ENCODE measurements at regions of chrX and their contacts with region 1.

Region 1: GRCh38 chrX:36930491-36930890 is 77.7 kb upstream of the FAM47C start:
- DNase-seq: no peak
- H3K4me3 ChIP-seq: no peak overlapping the region
- H3K27ac ChIP-seq: no peak overlapping the region
- H3K4me1 ChIP-seq: no peaks in the 10 kb centered on the region
- H3K27me3 ChIP-seq: no peaks in the 10 kb centered on the region
- CTCF ChIP-seq: no peak

Region 2: GRCh38 chrX:37047776-37048175 is 117.3 kb after region 1 on chrX:
- CTCF ChIA-PET with region 1: no interaction called
- POLR2A ChIA-PET with region 1: interaction called, 12 read pairs
- intact Hi-C with region 1: no loop called
- DNase-seq: no peak
- H3K4me3 ChIP-seq: no peak overlapping the region
- H3K27ac ChIP-seq: no peak overlapping the region
- H3K4me1 ChIP-seq: no peaks in the 10 kb centered on the region
- H3K27me3 ChIP-seq: no peaks in the 10 kb centered on the region
- CTCF ChIP-seq: no peak

Measured in A673 (cell line).